ENCODE measurements at regions of chr16 and their contacts with region 1.

Region 1: GRCh38 chr16:30534368-30535105 is at the start of gene ZNF747:
- DNase-seq: peak; percentile 94
- H3K4me3 Mint-ChIP-seq: peak within 1 kb of the TSS; percentile 89
- H3K27ac Mint-ChIP-seq: peak within 1 kb of the TSS; percentile 95
- H3K4me1 Mint-ChIP-seq: peaks cover 38% of the 10 kb centered on the region
- H3K27me3 Mint-ChIP-seq: no peaks in the 10 kb centered on the region
- total RNA-seq, gene ZNF747: 7.2 to 7.6 TPM

Region 2: GRCh38 chr16:30417529-30418349 is 116.8 kb before region 1 on chr16:
- CTCF ChIA-PET with region 1: interaction called, 15 read pairs
- POLR2A ChIA-PET with region 1: interaction called, 10 read pairs
- intact Hi-C with region 1: no loop called
- DNase-seq: peak; percentile 92
- H3K4me3 Mint-ChIP-seq: peak overlapping the region; percentile 58
- H3K27ac Mint-ChIP-seq: no peak overlapping the region
- H3K4me1 Mint-ChIP-seq: peaks cover 28% of the 10 kb centered on the region
- H3K27me3 Mint-ChIP-seq: no peaks in the 10 kb centered on the region

Region 3: DNA sequence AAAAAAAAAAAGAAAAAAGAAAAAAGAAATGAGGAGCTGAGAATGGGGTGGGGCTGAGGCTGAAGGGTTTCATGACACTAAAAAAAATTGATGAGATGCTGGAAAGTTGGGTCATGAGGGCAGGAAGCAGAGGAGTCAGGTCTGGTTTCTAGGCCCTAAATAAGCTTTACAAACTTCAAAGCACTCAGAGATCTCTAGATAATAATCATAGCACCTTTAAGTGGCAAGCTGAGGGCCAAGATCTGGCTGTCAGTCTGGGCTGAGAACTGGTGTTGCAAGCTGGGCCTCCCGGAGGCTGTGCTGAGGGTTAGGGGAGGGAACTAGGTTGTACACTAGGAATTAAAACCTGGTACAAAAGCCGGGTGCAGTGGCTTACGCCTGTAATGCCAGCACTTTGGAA is 17.2 kb after region 1 on chr16:
- CTCF ChIA-PET with region 1: interaction called, 53 read pairs
- POLR2A ChIA-PET with region 1: interaction called, 59 read pairs
- intact Hi-C with region 1: loop called (anchors 1 kb)
- DNase-seq: peak; percentile 79
- H3K4me3 Mint-ChIP-seq: peak overlapping the region; percentile 58
- H3K27ac Mint-ChIP-seq: peak overlapping the region; percentile 96
- H3K4me1 Mint-ChIP-seq: peaks cover 57% of the 10 kb centered on the region
- H3K27me3 Mint-ChIP-seq: no peaks in the 10 kb centered on the region

Region 4: DNA sequence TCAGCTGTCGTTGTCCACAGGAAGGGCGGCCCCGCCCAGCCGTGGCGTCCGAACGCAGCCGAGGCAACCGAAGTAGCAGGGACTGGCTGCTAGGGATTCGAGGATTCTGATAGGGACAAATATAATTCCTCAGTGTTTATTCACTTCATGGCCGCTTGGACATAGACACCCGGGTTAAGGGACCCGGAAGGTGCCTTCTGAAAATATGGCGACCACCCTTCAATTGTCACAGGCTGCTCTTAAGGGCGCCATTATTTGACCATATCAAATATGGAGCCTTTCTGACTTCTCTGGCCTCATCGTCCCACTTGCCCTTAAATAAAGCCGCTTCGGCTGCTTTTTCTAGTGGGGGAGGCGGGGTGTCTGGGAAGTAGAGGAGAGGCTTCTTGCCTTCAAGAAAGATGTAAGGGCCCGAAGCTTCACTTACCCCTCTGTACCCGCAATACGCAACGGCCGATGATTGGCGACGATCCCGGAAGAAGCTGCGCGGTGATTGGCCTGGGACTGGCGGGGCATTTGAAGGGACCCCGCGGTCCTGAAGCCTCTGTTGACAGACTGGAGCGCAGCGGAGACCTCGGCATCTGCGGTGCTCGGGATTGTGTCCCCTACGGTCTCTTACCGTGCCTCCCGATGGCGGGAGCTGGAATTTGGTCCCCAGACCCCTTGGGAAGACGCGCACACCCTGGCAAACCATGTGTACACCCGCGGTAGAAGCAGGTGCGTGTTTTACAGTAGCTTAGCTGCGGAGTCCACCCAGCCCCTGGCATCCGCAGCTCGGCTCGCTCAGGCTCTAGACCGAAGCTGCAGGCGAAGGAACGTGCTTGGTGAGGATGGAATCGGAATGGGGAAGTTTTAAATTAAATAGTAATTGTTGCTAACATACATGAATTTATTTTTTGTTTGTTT is 37.4 kb after region 1 on chr16 and contains the start of gene ZNF688:
- CTCF ChIA-PET with region 1: interaction called, 16 read pairs
- POLR2A ChIA-PET with region 1: interaction called, 34 read pairs
- intact Hi-C with region 1: loop called (anchors 1 kb)
- DNase-seq: peak; percentile 96
- H3K4me3 Mint-ChIP-seq: peak within 1 kb of the TSS; percentile 91
- H3K27ac Mint-ChIP-seq: peak within 1 kb of the TSS; percentile 92
- H3K4me1 Mint-ChIP-seq: peaks cover 48% of the 10 kb centered on the region
- H3K27me3 Mint-ChIP-seq: no peaks in the 10 kb centered on the region
- total RNA-seq, gene ZNF688: 9.2 to 9.3 TPM

Region 5: GRCh38 chr16:30602616-30603277 is 68.2 kb after region 1 on chr16:
- CTCF ChIA-PET with region 1: interaction called, 52 read pairs
- POLR2A ChIA-PET with region 1: interaction called, 7 read pairs
- intact Hi-C with region 1: loop called (anchors 1 kb)
- DNase-seq: no peak
- H3K4me3 Mint-ChIP-seq: no peak overlapping the region
- H3K27ac Mint-ChIP-seq: no peak overlapping the region
- H3K4me1 Mint-ChIP-seq: peaks cover 8% of the 10 kb centered on the region
- H3K27me3 Mint-ChIP-seq: no peaks in the 10 kb centered on the region

Region 6: DNA sequence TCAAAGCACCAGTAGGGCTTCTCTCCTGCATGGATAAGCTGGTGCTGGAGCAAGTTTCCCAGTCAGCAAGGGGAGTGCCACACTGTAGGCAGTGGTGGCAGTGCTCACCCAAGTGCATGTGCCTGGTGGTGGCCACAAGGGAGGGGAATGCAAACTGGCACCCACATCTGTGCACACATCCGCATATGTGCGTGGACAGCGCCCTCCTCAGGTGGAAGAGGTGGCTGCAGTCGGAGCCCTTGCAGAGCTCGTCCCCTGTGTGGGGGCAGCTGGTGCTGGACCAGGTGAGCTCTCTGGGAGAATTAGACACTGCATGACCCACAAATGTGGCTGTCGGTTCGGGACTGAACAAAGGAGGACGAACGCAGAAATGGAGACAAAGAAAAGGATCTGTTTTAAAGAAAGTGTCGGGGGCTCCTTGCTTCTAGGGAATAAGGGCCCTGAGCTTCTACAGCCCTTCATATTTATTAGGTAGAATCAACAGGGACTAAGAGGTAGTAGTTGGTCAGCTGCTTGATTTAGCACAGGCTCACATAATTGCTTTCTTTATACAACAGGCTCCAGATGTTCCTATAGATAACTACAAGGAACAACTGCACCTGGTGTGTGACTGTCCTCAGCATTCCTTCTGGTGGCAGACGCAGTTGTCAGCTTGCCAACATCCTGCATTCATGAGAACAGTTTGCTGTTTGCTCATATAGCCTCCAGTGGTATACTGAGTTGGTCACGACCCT is 81.0 kb after region 1 on chr16:
- CTCF ChIA-PET with region 1: interaction called, 16 read pairs
- POLR2A ChIA-PET with region 1: interaction called, 15 read pairs
- intact Hi-C with region 1: loop called (anchors 5 kb)
- DNase-seq: peak; percentile 91
- H3K4me3 Mint-ChIP-seq: no peak overlapping the region
- H3K27ac Mint-ChIP-seq: no peak overlapping the region
- H3K4me1 Mint-ChIP-seq: peaks cover 1% of the 10 kb centered on the region
- H3K27me3 Mint-ChIP-seq: no peaks in the 10 kb centered on the region